CD8-positive, alpha-beta T cell (primary cell): ENCODE measurements at regions of chr7 and their contacts with region 1.

Region 1: DNA sequence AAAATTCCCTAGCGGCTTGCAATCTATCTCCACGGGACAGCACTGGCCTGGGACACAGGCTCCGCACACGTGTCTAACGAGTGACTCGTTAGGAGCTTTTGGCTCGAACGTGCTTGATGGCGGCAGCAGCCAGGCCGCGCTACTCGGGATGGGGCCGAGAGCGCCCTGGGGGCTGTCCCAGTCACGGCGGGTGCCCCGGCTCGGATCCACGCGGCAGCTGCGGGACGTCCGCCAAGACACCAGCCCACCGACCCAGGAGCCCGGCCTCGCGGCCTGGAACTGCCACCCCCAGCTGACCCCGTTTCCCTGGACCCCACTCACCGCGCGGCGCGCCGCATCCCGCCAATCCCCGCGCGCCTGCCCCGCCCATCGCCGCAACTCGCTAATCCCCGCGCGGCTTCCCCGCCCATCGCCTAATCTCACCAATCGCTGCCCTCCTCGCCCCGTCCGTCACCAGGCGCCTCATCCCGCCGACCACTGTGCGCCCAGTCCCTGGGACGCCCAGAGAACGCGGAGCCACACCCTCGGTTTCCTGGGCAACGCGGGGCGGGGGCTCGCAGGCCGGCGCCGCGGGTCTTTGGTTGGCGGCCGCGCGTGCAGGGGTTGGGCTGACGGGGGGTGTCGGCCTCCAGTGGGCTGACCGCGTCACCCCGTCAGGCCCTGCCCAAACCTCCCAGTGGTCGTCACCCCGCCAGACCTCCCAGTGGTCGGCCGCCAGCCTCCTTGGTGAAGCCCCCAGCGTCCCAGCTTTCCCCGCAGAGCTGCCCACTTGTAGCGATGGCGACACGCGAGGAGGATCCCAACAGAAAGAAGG is at the start of gene POLD2:
- DNase-seq: peak; percentile 93 to 98 (median 97)
- ATAC-seq: peak; percentile 98
- H3K4me3 ChIP-seq: peak within 1 kb of the TSS; percentile 78 to 83
- H3K4me3 Mint-ChIP-seq: peak within 1 kb of the TSS; percentile 93
- H3K27ac ChIP-seq: peak within 1 kb of the TSS; percentile 75 to 79
- H3K27ac Mint-ChIP-seq: peak within 1 kb of the TSS; percentile 66
- H3K4me1 ChIP-seq: peaks cover 12% of the 10 kb centered on the region
- H3K4me1 Mint-ChIP-seq: peaks cover 34% of the 10 kb centered on the region
- H3K27me3 ChIP-seq: no peaks in the 10 kb centered on the region
- H3K27me3 Mint-ChIP-seq: no peaks in the 10 kb centered on the region
- CTCF ChIP-seq: no peak
- total RNA-seq, gene POLD2: 44.0 to 48.9 TPM

Region 2: DNA sequence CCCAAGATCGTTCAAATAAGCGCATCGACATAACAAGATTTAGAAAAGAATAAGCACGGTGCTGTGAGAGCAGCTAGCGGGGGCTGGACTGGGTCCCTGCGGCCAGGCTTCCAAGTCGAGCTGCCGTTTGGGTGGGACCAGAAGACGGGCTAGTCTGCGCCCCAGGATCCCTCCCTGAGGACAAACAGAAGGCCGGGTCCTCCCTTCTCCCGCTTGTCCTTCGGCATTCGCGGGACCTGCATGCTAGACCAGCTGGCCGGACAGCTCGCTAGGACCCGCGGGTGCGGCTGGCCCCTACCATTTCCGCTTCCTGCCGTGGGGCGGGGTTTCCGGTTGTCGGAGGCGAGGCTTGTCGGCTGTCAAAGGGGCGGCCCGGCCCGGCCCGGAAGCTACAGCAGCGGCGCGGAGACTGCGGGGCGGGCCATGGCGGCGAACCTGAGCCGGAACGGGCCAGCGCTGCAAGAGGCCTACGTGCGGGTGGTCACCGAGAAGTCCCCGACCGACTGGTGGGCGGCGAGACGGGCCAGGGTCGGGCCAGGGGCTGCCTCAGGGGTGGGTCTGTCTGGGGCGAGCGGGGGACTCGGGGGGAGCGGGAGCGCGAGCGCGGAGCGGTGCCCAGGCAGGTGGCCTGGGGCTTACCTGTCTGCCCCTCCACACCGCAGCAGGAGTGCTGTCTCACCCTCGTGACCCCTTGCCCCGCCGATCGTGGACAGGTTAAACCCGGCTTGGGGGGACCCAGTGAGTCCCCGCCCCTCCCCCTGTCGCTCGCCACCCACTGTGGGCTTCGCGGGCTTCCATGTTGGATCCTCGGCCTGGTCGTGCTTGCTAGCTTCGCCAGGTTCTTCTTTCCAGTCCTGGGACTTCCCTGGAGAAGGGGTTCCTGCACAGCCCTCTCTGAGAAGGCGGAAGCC is 78.8 kb before region 1 on chr7 and contains the start of gene DBNL:
- CTCF ChIA-PET with region 1: no interaction called
- POLR2A ChIA-PET with region 1: interaction called, 4 read pairs
- intact Hi-C with region 1: loop called in 1 of 2 experiments (anchors 2 kb)
- DNase-seq: peak; percentile 66 to 95 (median 88)
- ATAC-seq: peak; percentile 48
- H3K4me3 ChIP-seq: peak within 1 kb of the TSS; percentile 76 to 78
- H3K4me3 Mint-ChIP-seq: peak within 1 kb of the TSS; percentile 91
- H3K27ac ChIP-seq: peak within 1 kb of the TSS; percentile 73 to 91
- H3K27ac Mint-ChIP-seq: peak within 1 kb of the TSS; percentile 97
- H3K4me1 ChIP-seq: peaks cover 49% of the 10 kb centered on the region
- H3K4me1 Mint-ChIP-seq: peaks cover 50% of the 10 kb centered on the region
- H3K27me3 ChIP-seq: no peaks in the 10 kb centered on the region
- H3K27me3 Mint-ChIP-seq: no peaks in the 10 kb centered on the region
- CTCF ChIP-seq: no peak
- total RNA-seq, gene DBNL: 82.1 to 84.8 TPM

Region 3: GRCh38 chr7:44103923-44104859 is 19.2 kb before region 1 on chr7 and contains the start of gene AEBP1:
- CTCF ChIA-PET with region 1: no interaction called
- POLR2A ChIA-PET with region 1: interaction called, 3 read pairs
- intact Hi-C with region 1: loop called in 1 of 2 experiments (anchors 1 kb)
- DNase-seq: peak in 7 of 9 experiments; percentile 19 to 63 (median 37)
- ATAC-seq: peak; percentile 64
- H3K4me3 ChIP-seq: peak within 1 kb of the TSS; percentile 43 to 63
- H3K4me3 Mint-ChIP-seq: peak within 1 kb of the TSS; percentile 77
- H3K27ac ChIP-seq: peak within 1 kb of the TSS in 1 of 2 experiments; percentile 11
- H3K27ac Mint-ChIP-seq: peak within 1 kb of the TSS; percentile 74
- H3K4me1 ChIP-seq: peaks cover 10% of the 10 kb centered on the region
- H3K4me1 Mint-ChIP-seq: peaks cover 19% of the 10 kb centered on the region
- H3K27me3 ChIP-seq: peaks cover 0 to 3% of the 10 kb centered on the region in 2 experiments
- H3K27me3 Mint-ChIP-seq: no peaks in the 10 kb centered on the region
- CTCF ChIP-seq: no peak
- total RNA-seq, gene AEBP1: 15.9 to 22.6 TPM

Region 4: DNA sequence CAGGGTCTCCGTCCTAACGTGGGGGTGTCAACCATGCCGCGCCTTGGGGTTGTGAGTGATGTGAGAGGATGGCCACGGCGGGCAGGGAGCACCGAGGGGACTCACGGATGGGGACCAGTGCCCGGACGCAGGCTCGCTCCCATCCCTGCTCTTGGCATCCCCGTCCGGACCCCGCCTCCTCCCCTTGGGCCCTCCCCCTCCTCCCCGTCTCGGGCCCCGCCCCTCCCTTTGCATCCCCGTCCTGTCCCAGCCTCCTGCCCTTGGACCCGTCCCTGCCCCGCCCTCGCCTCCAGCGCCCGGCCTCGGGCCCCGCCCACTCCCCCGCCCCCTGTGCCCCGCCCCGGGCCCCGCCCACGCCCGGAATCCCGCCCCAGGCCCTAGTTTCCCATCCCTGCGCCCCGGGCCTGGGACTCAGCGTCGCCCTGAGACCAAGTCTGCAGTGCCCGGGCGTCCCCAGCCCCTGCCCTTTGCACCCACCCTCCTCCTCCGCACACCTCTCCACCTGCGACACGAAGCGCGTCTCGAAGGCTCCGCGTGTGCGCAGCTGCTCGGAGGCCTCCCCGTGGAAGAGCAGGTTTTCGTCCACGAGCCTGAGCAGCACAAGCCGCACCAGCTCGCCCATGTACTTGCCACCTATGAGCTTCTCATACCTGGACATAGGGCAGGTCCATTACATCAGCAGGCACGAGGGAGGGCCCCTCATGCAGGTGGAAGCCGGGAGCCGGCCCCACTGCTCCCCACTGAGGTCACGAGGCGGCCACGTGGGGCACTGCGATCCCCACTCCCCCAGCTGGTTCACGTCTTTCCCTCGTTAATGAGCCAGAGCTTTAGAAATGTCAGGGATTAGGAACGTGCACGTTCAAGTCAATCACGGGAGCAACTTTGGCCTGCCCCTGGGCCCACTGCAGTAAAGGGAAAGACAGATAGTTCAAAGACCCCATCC is 22.8 kb after region 1 on chr7:
- CTCF ChIA-PET with region 1: no interaction called
- POLR2A ChIA-PET with region 1: no interaction called
- intact Hi-C with region 1: loop called (anchors 1 kb)
- DNase-seq: peak in 8 of 9 experiments; percentile 10 to 74 (median 64)
- ATAC-seq: peak; percentile 61
- H3K4me3 ChIP-seq: peak overlapping the region; percentile 51 to 70
- H3K4me3 Mint-ChIP-seq: peak overlapping the region; percentile 81
- H3K27ac ChIP-seq: no peak overlapping the region
- H3K27ac Mint-ChIP-seq: peak overlapping the region; percentile 82
- H3K4me1 ChIP-seq: peaks cover 8% of the 10 kb centered on the region
- H3K4me1 Mint-ChIP-seq: peaks cover 10% of the 10 kb centered on the region
- H3K27me3 ChIP-seq: peaks cover 0 to 9% of the 10 kb centered on the region in 2 experiments
- H3K27me3 Mint-ChIP-seq: peaks cover 2% of the 10 kb centered on the region
- CTCF ChIP-seq: no peak

Region 5: GRCh38 chr7:44200647-44201461 is 77.5 kb after region 1 on chr7 and contains the start of gene YKT6:
- CTCF ChIA-PET with region 1: no interaction called
- POLR2A ChIA-PET with region 1: no interaction called
- intact Hi-C with region 1: loop called (anchors 1 to 2 kb)
- DNase-seq: peak; percentile 84 to 98 (median 95)
- ATAC-seq: peak; percentile 98
- H3K4me3 ChIP-seq: peak within 1 kb of the TSS; percentile 72 to 97
- H3K4me3 Mint-ChIP-seq: peak within 1 kb of the TSS; percentile 81
- H3K27ac ChIP-seq: peak within 1 kb of the TSS; percentile 65 to 78
- H3K27ac Mint-ChIP-seq: peak within 1 kb of the TSS; percentile 80
- H3K4me1 ChIP-seq: peaks cover 13% of the 10 kb centered on the region
- H3K4me1 Mint-ChIP-seq: peaks cover 34% of the 10 kb centered on the region
- H3K27me3 ChIP-seq: no peaks in the 10 kb centered on the region
- H3K27me3 Mint-ChIP-seq: peaks cover 5% of the 10 kb centered on the region
- CTCF ChIP-seq: peak; percentile 43
- total RNA-seq, gene YKT6: 111 to 114 TPM

Region 6: DNA sequence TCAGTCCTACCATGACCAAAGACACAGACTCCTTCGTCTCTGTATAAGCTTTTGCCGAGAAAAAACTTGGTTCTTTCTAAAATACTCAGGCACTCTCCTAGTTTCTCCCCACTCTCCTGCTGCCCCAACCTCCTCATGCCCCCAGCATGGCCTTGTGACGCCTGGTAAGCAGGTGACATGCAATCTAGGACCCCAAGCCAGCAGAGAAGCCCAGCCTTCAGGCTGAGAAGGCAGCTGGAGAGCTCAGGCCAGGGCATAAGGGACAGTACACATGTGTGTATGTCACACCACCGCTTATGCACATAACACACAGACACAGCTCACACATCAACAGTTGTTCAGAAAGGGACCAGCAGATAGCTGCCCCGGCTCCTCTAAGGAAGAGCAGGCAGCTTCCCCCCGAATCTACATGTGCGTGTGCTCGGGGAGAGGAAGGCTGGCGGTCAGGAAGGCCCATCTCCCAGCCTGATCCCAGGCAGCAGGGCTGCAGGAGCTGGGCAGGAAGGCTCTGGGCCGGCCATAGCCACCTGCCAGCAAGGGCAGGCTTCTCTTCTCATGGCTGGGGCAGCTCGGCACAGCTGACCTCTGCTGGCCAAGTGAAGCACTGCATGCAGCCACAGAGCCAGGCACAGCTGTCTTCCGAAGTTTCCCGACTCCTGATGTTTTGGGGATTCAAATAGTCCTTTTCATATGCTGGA is 441.8 kb after region 1 on chr7:
- CTCF ChIA-PET with region 1: no interaction called
- POLR2A ChIA-PET with region 1: no interaction called
- intact Hi-C with region 1: no loop called
- DNase-seq: peak; percentile 40 to 78 (median 65)
- ATAC-seq: peak; percentile 97
- H3K4me3 ChIP-seq: no peak overlapping the region
- H3K4me3 Mint-ChIP-seq: no peak overlapping the region
- H3K27ac ChIP-seq: no peak overlapping the region
- H3K27ac Mint-ChIP-seq: no peak overlapping the region
- H3K4me1 ChIP-seq: no peaks in the 10 kb centered on the region
- H3K4me1 Mint-ChIP-seq: peaks cover 10% of the 10 kb centered on the region
- H3K27me3 ChIP-seq: no peaks in the 10 kb centered on the region
- H3K27me3 Mint-ChIP-seq: no peaks in the 10 kb centered on the region
- CTCF ChIP-seq: peak; percentile 93

Region 7: DNA sequence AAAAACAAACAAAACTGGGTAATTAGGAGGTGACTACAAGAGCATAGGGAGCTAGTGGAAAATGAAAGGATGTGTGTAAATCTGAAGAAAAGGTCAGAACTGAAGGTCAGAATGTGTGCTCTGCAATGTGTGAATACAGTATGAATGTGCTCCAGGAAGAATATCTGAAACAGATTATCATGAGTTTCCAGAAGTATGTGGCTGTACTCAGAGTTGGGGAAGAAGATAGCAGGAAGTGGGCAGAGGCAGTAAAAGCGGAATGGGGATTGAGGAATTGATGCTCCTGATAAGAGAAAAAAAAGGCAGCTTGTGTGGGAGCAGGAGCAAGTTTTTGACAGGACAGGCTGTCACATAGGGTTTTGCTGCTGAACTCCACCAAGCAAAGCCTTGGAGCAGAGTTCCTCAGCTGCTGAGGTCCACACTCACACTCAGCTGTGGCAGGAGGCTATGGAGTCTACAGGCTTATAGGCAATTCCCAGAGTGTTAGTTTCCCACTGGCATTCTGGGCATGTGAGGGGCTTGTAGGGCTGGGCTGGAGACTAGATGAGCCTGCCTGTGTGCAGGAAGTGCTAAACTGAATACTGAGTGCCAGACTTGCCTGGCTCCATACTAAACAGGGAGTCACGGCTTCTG is 701.6 kb after region 1 on chr7:
- CTCF ChIA-PET with region 1: no interaction called
- POLR2A ChIA-PET with region 1: no interaction called
- intact Hi-C with region 1: no loop called
- DNase-seq: no peak
- ATAC-seq: peak; percentile 16
- H3K4me3 ChIP-seq: no peak overlapping the region
- H3K4me3 Mint-ChIP-seq: no peak overlapping the region
- H3K27ac ChIP-seq: peak overlapping the region in 1 of 2 experiments; percentile 28
- H3K27ac Mint-ChIP-seq: peak overlapping the region; percentile 45
- H3K4me1 ChIP-seq: no peaks in the 10 kb centered on the region
- H3K4me1 Mint-ChIP-seq: peaks cover 13% of the 10 kb centered on the region
- H3K27me3 ChIP-seq: no peaks in the 10 kb centered on the region
- H3K27me3 Mint-ChIP-seq: no peaks in the 10 kb centered on the region
- CTCF ChIP-seq: no peak